Heart right ventricle (tissue), 16 donors: ENCODE measurements at regions of chr17 and their contacts with region 1.

Region 1: GRCh38 chr17:2401426-2402221 is 764 bp upstream of the MNT start:
- DNase-seq: peak; percentile 100
- ATAC-seq: peak; percentile 56 to 80 (median 74)
- H3K4me3 ChIP-seq: peak overlapping the region; percentile 10 to 99 (median 89)
- H3K27ac ChIP-seq: peak overlapping the region; percentile 92 to 100 (median 98)
- H3K4me1 ChIP-seq: peaks cover 28 to 70% (median 66%) of the 10 kb centered on the region in 9 donors
- H3K27me3 ChIP-seq: no peaks in the 10 kb centered on the region
- CTCF ChIP-seq: no peak

Region 2: DNA sequence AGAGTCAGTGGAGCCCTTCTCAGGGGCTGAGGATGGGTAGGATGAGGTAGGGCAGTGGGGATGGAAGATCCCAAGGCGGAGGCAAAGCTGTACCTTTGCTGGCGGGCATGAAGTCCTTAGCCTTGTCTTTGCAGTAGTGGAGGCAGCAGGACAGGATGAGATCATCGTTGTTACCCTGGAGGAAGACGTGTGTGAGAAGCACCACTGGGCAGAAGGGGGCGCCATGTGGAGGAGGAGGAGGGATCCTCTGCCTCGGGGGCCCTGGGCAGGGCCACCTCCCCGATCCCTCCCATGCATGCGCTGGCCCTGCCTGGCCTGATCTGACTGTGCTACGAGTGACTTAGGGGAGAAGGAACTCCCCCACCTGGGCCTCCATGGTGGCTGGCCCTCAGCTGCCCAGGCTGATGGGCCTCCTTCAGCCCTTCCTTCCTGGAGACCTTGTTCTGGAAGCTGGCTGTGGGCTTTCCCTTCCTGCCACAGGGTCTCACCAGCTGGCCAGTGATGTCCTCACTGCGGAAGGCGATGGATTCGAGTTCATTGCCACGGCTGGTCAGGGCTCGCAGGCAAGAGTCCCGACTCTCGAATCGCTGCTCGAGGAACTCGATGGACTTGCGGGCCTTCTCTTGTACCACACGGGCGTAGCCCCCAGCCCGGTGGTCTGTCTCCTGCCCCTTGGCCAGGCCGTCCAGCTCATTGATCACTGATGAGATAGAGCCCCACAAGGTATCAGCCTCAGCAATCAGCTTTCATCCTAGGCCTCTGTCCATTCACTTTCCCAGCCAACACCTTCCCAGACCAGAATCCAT is 336.4 kb before region 1 on chr17:
- intact Hi-C with region 1: loop called in 1 of 10 experiments (anchors 10 kb)
- DNase-seq: peak in 1 of 2 donors; percentile 71
- ATAC-seq: peak in 6 of 8 donors; percentile 6 to 14 (median 8)
- H3K4me3 ChIP-seq: no peak overlapping the region
- H3K27ac ChIP-seq: peak overlapping the region; percentile 54 to 97 (median 93)
- H3K4me1 ChIP-seq: peaks cover 35 to 98% (median 87%) of the 10 kb centered on the region in 9 donors
- H3K27me3 ChIP-seq: no peaks in the 10 kb centered on the region
- CTCF ChIP-seq: peak in 6 of 9 donors; percentile 33 to 59 (median 48)

Region 3: GRCh38 chr17:2453325-2453724 is 51.7 kb after region 1 on chr17:
- intact Hi-C with region 1: no loop called
- DNase-seq: no peak
- ATAC-seq: no peak
- H3K4me3 ChIP-seq: no peak overlapping the region
- H3K27ac ChIP-seq: no peak overlapping the region
- H3K4me1 ChIP-seq: peaks cover 0 to 23% (median 0%) of the 10 kb centered on the region in 9 donors
- H3K27me3 ChIP-seq: no peaks in the 10 kb centered on the region
- CTCF ChIP-seq: no peak

Region 4: GRCh38 chr17:2707721-2708584 is 306.3 kb after region 1 on chr17:
- intact Hi-C with region 1: loop called in 1 of 10 experiments (anchors 10 kb)
- DNase-seq: peak; percentile 81 to 83
- ATAC-seq: peak; percentile 23 to 73 (median 64)
- H3K4me3 ChIP-seq: peak overlapping the region; percentile 20 to 99 (median 64)
- H3K27ac ChIP-seq: peak overlapping the region; percentile 70 to 99 (median 92)
- H3K4me1 ChIP-seq: peaks cover 19 to 78% (median 64%) of the 10 kb centered on the region in 9 donors
- H3K27me3 ChIP-seq: no peaks in the 10 kb centered on the region
- CTCF ChIP-seq: peak; percentile 27 to 70 (median 54)